A549 (cell line): ENCODE measurements at regions of chr2 and their contacts with region 1.

Region 1: GRCh38 chr2:85678794-85679672 is 11.0 kb upstream of the SFTPB start:
- DNase-seq: peak; percentile 80 to 94
- ATAC-seq: peak; percentile 81 to 97
- H3K4me3 ChIP-seq: no peak overlapping the region
- H3K27ac ChIP-seq: peak overlapping the region; percentile 70 to 73
- H3K4me1 ChIP-seq: peaks cover 26% of the 10 kb centered on the region
- CTCF ChIP-seq: peak; percentile 94
- EP300 ChIP-seq: no peak
- POLR2A ChIP-seq: no peak
- RAD21 ChIP-seq: peak; percentile 91 to 97

Region 2: GRCh38 chr2:85635636-85636035 is 43.4 kb before region 1 on chr2:
- CTCF ChIA-PET with region 1: interaction called, 23 read pairs
- POLR2A ChIA-PET with region 1: no interaction called
- DNase-seq: no peak
- ATAC-seq: no peak
- H3K4me3 ChIP-seq: no peak overlapping the region
- H3K27ac ChIP-seq: no peak overlapping the region
- H3K4me1 ChIP-seq: peaks cover 3% of the 10 kb centered on the region; the same call in 1 of the 3 replicates
- CTCF ChIP-seq: no peak
- EP300 ChIP-seq: no peak
- POLR2A ChIP-seq: no peak
- RAD21 ChIP-seq: no peak

Region 3: GRCh38 chr2:85662899-85663593 is 16.0 kb before region 1 on chr2:
- CTCF ChIA-PET with region 1: interaction called, 59 read pairs
- POLR2A ChIA-PET with region 1: no interaction called
- DNase-seq: peak in 1 of 2 experiments; percentile 67
- ATAC-seq: peak; percentile 72 to 80
- H3K4me3 ChIP-seq: no peak overlapping the region
- H3K27ac ChIP-seq: peak overlapping the region in 1 of 2 experiments; percentile 74; a peak in 3 of 6 replicates
- H3K4me1 ChIP-seq: peaks cover 15% of the 10 kb centered on the region
- CTCF ChIP-seq: no peak
- EP300 ChIP-seq: no peak
- POLR2A ChIP-seq: 0 out of 2 replicates have a peak, but pooled peaks have one; percentile 5
- RAD21 ChIP-seq: no peak

Region 4: DNA sequence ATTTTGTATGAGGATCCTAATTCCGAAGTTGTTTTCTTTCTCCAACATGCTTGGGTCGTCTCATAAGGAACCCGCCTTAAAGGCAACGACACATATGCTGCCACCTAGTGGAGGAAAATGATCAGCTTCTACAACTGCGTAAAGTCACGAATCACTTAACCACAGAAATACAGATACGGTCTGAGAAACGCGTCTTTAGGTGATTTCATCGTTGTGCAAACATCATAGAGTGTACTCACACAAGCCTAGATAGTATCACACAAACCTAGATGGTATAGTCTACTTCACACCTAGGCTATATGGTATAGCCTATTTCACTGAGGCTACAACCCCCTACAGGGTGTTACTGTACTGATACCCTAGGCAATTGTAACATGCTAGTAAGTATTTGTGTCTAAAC is 28.3 kb after region 1 on chr2:
- CTCF ChIA-PET with region 1: interaction called, 228 read pairs
- POLR2A ChIA-PET with region 1: no interaction called
- DNase-seq: peak; percentile 92 to 96
- ATAC-seq: peak; percentile 82 to 94
- H3K4me3 ChIP-seq: no peak overlapping the region
- H3K27ac ChIP-seq: peak overlapping the region; percentile 84; a peak in 5 of 6 replicates
- H3K4me1 ChIP-seq: peaks cover 56% of the 10 kb centered on the region
- CTCF ChIP-seq: peak; percentile 98
- EP300 ChIP-seq: no peak
- POLR2A ChIP-seq: no peak
- RAD21 ChIP-seq: peak; percentile 86 to 89

Region 5: DNA sequence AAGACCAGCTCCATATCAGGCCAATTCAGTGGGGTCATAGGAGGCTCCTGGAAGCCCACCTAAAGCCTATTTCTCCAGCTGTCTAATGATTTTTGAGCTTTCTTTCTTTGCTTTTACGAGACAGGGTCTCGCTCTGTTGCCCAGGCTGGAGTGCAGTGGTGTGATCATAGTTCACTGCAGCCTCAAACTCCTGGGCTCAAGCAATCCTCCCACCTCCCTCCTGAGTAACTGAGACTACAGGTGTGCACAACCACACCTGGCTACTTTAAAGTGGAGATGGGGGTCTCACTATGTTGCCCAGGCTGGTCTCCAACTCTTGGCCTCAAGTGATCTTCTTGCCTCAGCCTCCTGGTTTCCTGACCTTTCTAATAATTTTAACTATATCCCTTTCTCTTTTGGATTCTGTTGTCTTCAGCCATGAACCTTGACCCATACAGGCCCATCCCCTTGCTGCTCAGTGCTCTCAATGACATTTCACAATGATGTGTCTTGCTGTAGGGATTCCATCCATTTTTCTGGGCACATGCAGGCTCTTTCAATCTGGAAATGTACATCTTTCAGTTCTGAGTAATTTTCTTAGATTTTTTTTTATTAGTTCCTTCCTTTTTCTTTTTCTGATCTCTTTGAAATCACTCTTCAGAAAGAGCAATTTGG is 44.8 kb after region 1 on chr2:
- CTCF ChIA-PET with region 1: interaction called, 35 read pairs
- POLR2A ChIA-PET with region 1: no interaction called
- DNase-seq: no peak
- ATAC-seq: no peak
- H3K4me3 ChIP-seq: no peak overlapping the region
- H3K27ac ChIP-seq: no peak overlapping the region; a peak in 1 of 6 replicates
- H3K4me1 ChIP-seq: peaks cover 12% of the 10 kb centered on the region
- CTCF ChIP-seq: no peak
- EP300 ChIP-seq: no peak
- POLR2A ChIP-seq: no peak
- RAD21 ChIP-seq: no peak